ENCODE measurements at regions of chr4 and their contacts with region 1.

Region 1: DNA sequence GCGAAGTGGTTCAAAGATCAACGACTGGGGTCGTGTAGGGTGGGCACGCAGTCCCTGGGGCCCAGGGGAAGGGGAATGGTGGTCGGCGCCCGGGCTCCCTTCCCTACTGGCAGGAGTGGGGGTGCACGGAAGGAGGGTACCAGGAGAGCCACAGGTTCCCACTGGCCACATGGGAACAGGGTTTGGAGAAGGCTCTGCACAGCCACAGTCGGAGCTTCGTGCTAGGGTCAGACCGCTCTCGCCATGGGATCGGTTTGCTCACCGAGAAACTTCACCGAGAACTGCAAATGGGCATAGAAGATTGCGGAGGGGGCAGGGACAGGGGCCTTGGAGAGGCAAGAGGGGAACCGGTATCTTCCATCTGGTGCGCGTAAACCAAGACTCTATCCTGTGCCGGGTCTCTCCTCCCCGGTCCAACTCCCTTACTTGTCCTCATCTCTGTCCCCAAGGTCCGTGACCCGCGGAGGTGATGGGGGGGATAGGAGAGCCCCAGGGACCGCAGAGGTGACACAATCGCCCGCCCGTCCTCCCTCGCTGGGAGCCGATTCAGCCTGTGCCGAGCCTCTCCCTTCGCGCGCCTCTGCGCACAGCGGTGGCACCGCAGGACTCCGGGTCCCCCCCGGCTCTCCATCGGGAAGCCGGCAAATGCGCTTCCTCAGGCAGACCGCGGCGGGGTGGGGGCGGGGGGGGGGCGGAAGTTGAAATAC is 1.0 kb downstream of the SCD5 start:
- DNase-seq: peak in 2 of 3 donors; percentile 49 to 67
- H3K4me3 ChIP-seq: peak overlapping the region; percentile 11 to 84 (median 73)
- H3K27ac ChIP-seq: no peak overlapping the region
- H3K4me1 ChIP-seq: peaks cover 0 to 28% (median 27%) of the 10 kb centered on the region in 4 experiments
- H3K27me3 ChIP-seq: peaks cover 0 to 19% (median 0%) of the 10 kb centered on the region in 5 experiments

Region 2: GRCh38 chr4:82785611-82786400 is 11.8 kb before region 1 on chr4:
- CTCF ChIA-PET with region 1: interaction called, 11 read pairs
- POLR2A ChIA-PET with region 1: interaction called, 3 read pairs
- DNase-seq: peak; percentile 40 to 87 (median 80)
- H3K4me3 ChIP-seq: peak overlapping the region in 1 of 7 experiments; percentile 42
- H3K27ac ChIP-seq: peak overlapping the region; percentile 10 to 74
- H3K4me1 ChIP-seq: peaks cover 3 to 32% (median 17%) of the 10 kb centered on the region in 4 experiments
- H3K27me3 ChIP-seq: no peaks in the 10 kb centered on the region

Region 3: DNA sequence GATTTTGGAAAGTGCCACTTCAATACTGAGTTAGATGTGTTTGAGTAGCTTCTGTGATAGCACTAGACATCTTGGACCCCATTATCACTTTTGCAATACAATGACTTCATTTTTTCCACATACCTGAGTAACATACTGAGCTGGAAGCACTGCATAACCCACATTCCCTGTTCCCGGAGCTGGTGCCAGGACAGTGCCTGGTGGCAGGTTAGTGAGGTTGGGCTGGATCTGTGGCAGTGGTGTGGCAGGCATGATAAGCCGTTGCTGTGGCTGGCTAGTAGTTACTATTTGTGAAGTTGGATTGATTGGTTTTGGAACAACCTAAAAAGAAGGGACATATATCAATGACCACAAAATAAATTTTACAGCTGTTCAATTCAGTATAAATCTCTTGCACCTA is 141.9 kb after region 1 on chr4:
- CTCF ChIA-PET with region 1: no interaction called
- POLR2A ChIA-PET with region 1: no interaction called
- DNase-seq: no peak
- H3K4me3 ChIP-seq: no peak overlapping the region
- H3K27ac ChIP-seq: no peak overlapping the region
- H3K4me1 ChIP-seq: no peaks in the 10 kb centered on the region
- H3K27me3 ChIP-seq: no peaks in the 10 kb centered on the region

Measured in common myeloid progenitor, CD34-positive (primary cell).